ENCODE measurements at regions of chrX and their contacts with region 1.

Region 1: DNA sequence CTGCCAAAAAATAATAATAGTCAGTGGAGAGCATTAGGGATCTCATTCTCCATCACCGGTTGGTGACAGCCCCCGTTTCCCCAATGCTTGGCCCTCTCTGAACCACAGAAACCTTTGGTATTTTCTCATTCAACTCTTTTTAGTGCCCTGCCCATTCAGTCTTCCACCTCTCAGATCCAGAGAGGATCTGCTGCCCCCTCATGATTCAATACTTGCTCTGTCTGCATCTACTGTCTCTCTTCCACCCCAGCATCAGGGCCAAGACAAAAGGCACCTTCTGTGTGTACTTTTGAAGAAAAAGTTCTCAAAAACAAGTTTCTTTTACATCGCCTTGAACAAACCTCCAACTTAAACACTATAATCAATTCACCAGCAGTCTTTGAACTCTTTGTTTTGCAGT is 19.3 kb downstream of the CLTRN start:
- DNase-seq: no peak
- H3K4me3 Mint-ChIP-seq: no peak overlapping the region
- H3K27ac Mint-ChIP-seq: peak overlapping the region; percentile 32
- H3K4me1 Mint-ChIP-seq: peaks cover 3% of the 10 kb centered on the region
- H3K27me3 Mint-ChIP-seq: peaks cover 7% of the 10 kb centered on the region

Region 2: DNA sequence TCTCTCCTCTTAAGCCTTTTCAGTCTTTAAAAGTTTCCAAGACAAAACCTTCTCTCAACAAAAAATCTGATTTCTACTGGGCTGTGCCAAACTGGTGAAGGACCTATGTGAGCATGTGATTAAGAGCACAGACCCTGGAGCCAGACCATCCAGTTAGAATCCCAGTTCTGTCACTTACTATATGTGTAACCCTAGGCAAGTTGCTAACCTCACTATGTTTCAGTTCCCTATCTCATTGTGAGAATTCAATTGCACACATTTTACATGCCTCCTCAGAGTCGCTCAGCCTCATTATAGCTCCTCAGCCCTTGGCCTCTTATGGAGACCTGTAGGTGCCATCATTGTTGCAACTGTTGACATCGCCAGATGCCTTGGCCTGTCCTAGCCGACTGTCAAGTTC is 206.9 kb before region 1 on chrX:
- intact Hi-C with region 1: no loop called
- DNase-seq: no peak
- H3K4me3 Mint-ChIP-seq: no peak overlapping the region
- H3K27ac Mint-ChIP-seq: no peak overlapping the region
- H3K4me1 Mint-ChIP-seq: no peaks in the 10 kb centered on the region
- H3K27me3 Mint-ChIP-seq: peaks cover 4% of the 10 kb centered on the region

Region 3: GRCh38 chrX:15451938-15452337 is 193.3 kb before region 1 on chrX:
- intact Hi-C with region 1: no loop called
- DNase-seq: no peak
- H3K4me3 Mint-ChIP-seq: no peak overlapping the region
- H3K27ac Mint-ChIP-seq: no peak overlapping the region
- H3K4me1 Mint-ChIP-seq: no peaks in the 10 kb centered on the region
- H3K27me3 Mint-ChIP-seq: no peaks in the 10 kb centered on the region

Region 4: DNA sequence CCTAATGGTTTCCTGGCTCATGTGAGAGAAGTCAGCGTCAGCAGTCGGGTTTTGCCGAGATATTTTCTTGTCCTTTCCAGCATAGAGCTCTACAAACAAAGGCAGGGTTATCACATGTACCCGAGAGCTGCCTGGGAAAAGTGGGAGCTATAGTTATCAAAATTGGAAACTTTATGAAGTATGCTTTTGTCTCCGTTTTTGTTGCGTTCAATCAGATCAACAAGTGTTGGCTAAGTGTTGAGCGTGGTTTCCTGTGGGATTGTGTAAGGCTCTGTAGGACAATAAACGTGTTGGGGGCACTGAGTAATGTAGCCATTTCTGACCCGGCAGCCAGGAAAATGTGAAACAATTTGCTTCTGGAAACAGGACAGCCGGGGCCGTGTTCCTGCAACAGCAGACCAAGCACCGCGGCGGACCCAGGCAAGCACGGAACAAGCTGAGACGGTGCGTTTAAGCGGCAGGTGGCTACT is 144.7 kb before region 1 on chrX and contains the start of gene BMX:
- intact Hi-C with region 1: loop called (anchors 10 kb)
- DNase-seq: no peak
- H3K4me3 Mint-ChIP-seq: no peak within 1 kb of the TSS
- H3K27ac Mint-ChIP-seq: no peak within 1 kb of the TSS
- H3K4me1 Mint-ChIP-seq: peaks cover 2% of the 10 kb centered on the region
- H3K27me3 Mint-ChIP-seq: peaks cover 29% of the 10 kb centered on the region
- total RNA-seq, gene BMX: not detected in 2 replicates